Right cardiac atrium (tissue), 5 donors: ENCODE measurements at regions of chr7 and their contacts with region 1.

Region 1: GRCh38 chr7:28298870-28299518 is 113.3 kb upstream of the CREB5 start:
- DNase-seq: no peak
- ATAC-seq: peak; percentile 36 to 69
- H3K4me3 ChIP-seq: no peak overlapping the region
- H3K27ac ChIP-seq: no peak overlapping the region
- H3K4me1 ChIP-seq: no peaks in the 10 kb centered on the region
- H3K27me3 ChIP-seq: no peaks in the 10 kb centered on the region

Region 2: DNA sequence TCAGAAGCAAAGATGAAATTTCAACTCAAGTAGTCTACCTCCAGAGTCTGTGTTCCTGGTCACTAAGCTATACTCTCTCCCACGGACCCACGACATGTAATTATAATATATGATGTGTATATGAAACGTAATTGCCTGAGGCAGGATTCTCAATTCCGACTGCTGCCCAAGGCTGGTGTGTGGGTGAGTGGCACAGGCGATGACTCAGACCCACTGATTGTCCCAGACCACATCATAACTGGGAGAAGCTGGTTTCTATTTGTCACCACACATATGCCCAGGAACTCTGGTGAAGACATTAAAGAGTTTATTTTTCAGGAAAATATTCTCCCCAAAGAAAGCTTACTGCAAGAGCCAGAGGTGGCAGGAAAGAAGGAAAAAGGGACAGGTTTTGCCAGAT is 337.7 kb before region 1 on chr7:
- intact Hi-C with region 1: no loop called
- DNase-seq: no peak
- ATAC-seq: no peak
- H3K4me3 ChIP-seq: no peak overlapping the region
- H3K27ac ChIP-seq: no peak overlapping the region
- H3K4me1 ChIP-seq: no peaks in the 10 kb centered on the region
- H3K27me3 ChIP-seq: no peaks in the 10 kb centered on the region

Region 3: GRCh38 chr7:28343462-28343861 is 44.5 kb after region 1 on chr7:
- intact Hi-C with region 1: no loop called
- DNase-seq: no peak
- ATAC-seq: no peak
- H3K4me3 ChIP-seq: no peak overlapping the region
- H3K27ac ChIP-seq: no peak overlapping the region
- H3K4me1 ChIP-seq: no peaks in the 10 kb centered on the region
- H3K27me3 ChIP-seq: no peaks in the 10 kb centered on the region

Region 4: GRCh38 chr7:28615091-28615490 is 316.1 kb after region 1 on chr7:
- intact Hi-C with region 1: no loop called
- DNase-seq: peak in 1 of 3 donors; percentile 43
- ATAC-seq: peak; percentile 38 to 41
- H3K4me3 ChIP-seq: no peak overlapping the region
- H3K27ac ChIP-seq: no peak overlapping the region
- H3K4me1 ChIP-seq: no peaks in the 10 kb centered on the region
- H3K27me3 ChIP-seq: no peaks in the 10 kb centered on the region

Region 5: GRCh38 chr7:28853834-28854749 is 555.1 kb after region 1 on chr7:
- intact Hi-C with region 1: loop called in 2 of 4 experiments (anchors 5 to 10 kb)
- DNase-seq: peak; percentile 80 to 93 (median 92)
- ATAC-seq: peak; percentile 98 to 99
- H3K4me3 ChIP-seq: peak overlapping the region; percentile 66
- H3K27ac ChIP-seq: no peak overlapping the region
- H3K4me1 ChIP-seq: no peaks in the 10 kb centered on the region
- H3K27me3 ChIP-seq: no peaks in the 10 kb centered on the region

Region 6: DNA sequence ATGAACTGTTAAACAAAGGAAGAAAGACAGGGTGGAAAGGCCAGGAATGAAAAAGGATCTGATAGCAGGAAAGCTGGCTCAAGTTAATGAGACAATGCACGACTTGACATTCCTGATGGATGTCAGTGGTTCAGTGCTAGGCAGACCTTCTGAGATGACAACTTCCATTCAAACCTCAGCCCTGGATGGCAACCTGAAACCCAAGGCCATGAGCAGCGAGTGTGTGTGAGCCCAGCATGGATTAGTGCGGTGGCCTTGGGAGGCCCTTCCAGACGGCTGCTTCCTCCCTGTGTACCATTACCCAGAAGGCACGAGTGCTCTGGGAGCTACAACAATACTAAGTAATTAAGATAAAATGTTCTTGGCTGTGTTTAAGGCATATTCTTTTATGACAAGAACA is 640.4 kb after region 1 on chr7:
- intact Hi-C with region 1: no loop called
- DNase-seq: no peak
- ATAC-seq: peak in 1 of 2 donors; percentile 57
- H3K4me3 ChIP-seq: no peak overlapping the region
- H3K27ac ChIP-seq: no peak overlapping the region
- H3K4me1 ChIP-seq: no peaks in the 10 kb centered on the region
- H3K27me3 ChIP-seq: no peaks in the 10 kb centered on the region